GM12878 (cell line): ENCODE measurements at regions of chr12 and their contacts with region 1.

Region 1: GRCh38 chr12:123427036-123427769 is 9.3 kb downstream of the RILPL2 start:
- DNase-seq: peak; percentile 97
- ATAC-seq: peak; percentile 90
- H3K4me3 ChIP-seq: peak overlapping the region; percentile 46; the same call in 1 of the 2 replicates
- H3K27ac ChIP-seq: peak overlapping the region; percentile 66
- H3K4me1 ChIP-seq: peaks cover 33% of the 10 kb centered on the region
- H3K27me3 ChIP-seq: no peaks in the 10 kb centered on the region
- CTCF ChIP-seq: no peak
- EP300 ChIP-seq: peak; percentile 42 to 77
- POLR2A ChIP-seq: peak; percentile 68
- RAD21 ChIP-seq: no peak

Region 2: GRCh38 chr12:123388177-123388947 is 38.8 kb before region 1 on chr12:
- CTCF ChIA-PET with region 1: interaction called, 6 read pairs
- POLR2A ChIA-PET with region 1: interaction called, 12 read pairs
- RAD21 ChIA-PET with region 1: interaction called, 9 read pairs
- SMC1A ChIA-PET with region 1: interaction called, 12 read pairs
- in situ Hi-C with region 1: no loop called
- intact Hi-C with region 1: loop called (anchors 5 kb)
- DNase-seq: peak; percentile 21
- ATAC-seq: peak; percentile 52
- H3K4me3 ChIP-seq: peak overlapping the region; percentile 98
- H3K27ac ChIP-seq: peak overlapping the region; percentile 66
- H3K4me1 ChIP-seq: peaks cover 20% of the 10 kb centered on the region
- H3K27me3 ChIP-seq: no peaks in the 10 kb centered on the region
- CTCF ChIP-seq: 0 out of 6 replicates have a peak, but pooled peaks of 1 of the 3 experiments have one; percentile 13
- EP300 ChIP-seq: 0 out of 4 replicates have a peak, but pooled peaks of 1 of the 2 experiments have one; percentile 10
- POLR2A ChIP-seq: no peak
- RAD21 ChIP-seq: no peak

Region 3: GRCh38 chr12:123441523-123442164 is 14.4 kb after region 1 on chr12:
- CTCF ChIA-PET with region 1: no interaction called
- POLR2A ChIA-PET with region 1: interaction called, 14 read pairs
- RAD21 ChIA-PET with region 1: interaction called, 15 read pairs
- SMC1A ChIA-PET with region 1: interaction called, 14 read pairs
- in situ Hi-C with region 1: no loop called
- intact Hi-C with region 1: no loop called
- DNase-seq: peak; percentile 73
- ATAC-seq: peak; percentile 75
- H3K4me3 ChIP-seq: peak overlapping the region; percentile 67
- H3K27ac ChIP-seq: peak overlapping the region; percentile 81
- H3K4me1 ChIP-seq: peaks cover 33% of the 10 kb centered on the region
- H3K27me3 ChIP-seq: no peaks in the 10 kb centered on the region
- CTCF ChIP-seq: no peak
- EP300 ChIP-seq: peak; percentile 53 to 54; a peak in 2 of 4 replicates
- POLR2A ChIP-seq: no peak
- RAD21 ChIP-seq: no peak

Region 4: DNA sequence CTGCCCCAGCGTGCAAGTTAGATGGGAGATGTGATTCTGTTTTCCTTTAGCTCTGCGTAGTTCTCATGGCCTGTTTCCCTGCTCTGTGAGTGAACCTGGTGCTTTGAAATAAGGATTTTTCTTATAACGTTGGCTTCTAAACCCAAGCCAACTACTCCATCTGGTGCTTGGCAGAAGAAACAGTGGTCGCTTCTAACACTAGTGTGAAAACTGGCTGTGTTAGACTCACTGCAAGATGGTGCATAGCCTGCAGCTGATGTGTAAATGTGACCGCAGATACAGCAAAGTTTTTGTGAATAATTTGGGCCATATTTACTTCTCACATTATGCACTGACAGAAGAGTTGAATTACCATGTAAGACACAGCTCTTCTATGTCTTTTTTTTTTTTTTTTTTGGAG is 218.7 kb after region 1 on chr12:
- CTCF ChIA-PET with region 1: no interaction called
- POLR2A ChIA-PET with region 1: no interaction called
- RAD21 ChIA-PET with region 1: no interaction called
- SMC1A ChIA-PET with region 1: no interaction called
- in situ Hi-C with region 1: no loop called
- intact Hi-C with region 1: no loop called
- DNase-seq: no peak
- ATAC-seq: no peak
- H3K4me3 ChIP-seq: no peak overlapping the region
- H3K27ac ChIP-seq: no peak overlapping the region
- H3K4me1 ChIP-seq: no peaks in the 10 kb centered on the region
- H3K27me3 ChIP-seq: no peaks in the 10 kb centered on the region
- CTCF ChIP-seq: no peak
- EP300 ChIP-seq: no peak
- POLR2A ChIP-seq: no peak
- RAD21 ChIP-seq: no peak